ENCODE measurements at regions of chr9 and their contacts with region 1.

Region 1: DNA sequence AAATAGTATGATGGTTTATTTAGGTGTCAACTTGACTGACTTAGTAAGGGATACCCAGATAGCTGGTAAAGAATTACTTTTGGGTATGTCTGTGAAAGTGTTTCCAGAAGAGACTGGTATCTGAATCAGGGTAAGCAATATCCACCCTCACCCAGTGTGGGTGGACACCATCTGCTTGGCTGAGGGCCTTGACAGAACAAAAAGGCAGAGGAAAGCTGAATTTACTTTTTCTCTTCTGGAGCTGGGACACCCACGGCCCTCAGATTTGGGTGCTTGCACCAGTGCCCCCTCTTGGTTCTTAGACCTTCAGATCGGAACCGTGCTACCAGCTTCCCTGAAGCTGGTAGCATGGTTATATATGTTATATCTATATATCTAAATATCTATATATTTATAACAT is 489.5 kb upstream of the MPDZ start:
- DNase-seq: no peak

Region 2: GRCh38 chr9:13705918-13706317 is 63.1 kb before region 1 on chr9:
- intact Hi-C with region 1: loop called (anchors 5 kb)
- DNase-seq: no peak

Measured in cardiac septum (tissue), 1 donor.